Activated CD4-positive, alpha-beta memory T cell treated with anti-CD3 and anti-CD28 coated beads for 36 hours (primary cell): ENCODE measurements at regions of chr18 and their contacts with region 1.

Region 1: DNA sequence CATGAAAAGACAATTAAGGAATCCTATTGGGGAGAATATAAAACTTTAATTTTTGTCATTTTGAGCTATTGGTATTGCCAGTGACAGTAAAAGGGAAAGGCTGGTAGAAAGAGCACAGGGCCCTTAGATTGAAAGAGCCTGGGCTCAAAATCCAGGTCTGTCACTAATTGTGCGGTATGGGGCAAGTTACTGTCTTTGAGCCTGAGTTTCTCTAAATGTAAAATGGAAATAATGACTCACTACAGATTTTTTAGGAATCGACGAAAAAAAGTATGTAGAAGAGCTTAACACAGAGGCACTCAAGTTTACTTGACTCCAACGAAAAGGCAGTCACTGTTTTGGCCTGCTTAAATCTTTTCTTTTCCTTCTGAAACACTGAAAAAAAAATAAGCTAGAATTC is 7.0 kb downstream of the NDUFV2 start:
- DNase-seq: no peak
- H3K4me3 Mint-ChIP-seq: peak overlapping the region; percentile 90
- H3K27ac Mint-ChIP-seq: peak overlapping the region; percentile 75
- H3K4me1 Mint-ChIP-seq: peaks cover 82% of the 10 kb centered on the region
- H3K27me3 Mint-ChIP-seq: no peaks in the 10 kb centered on the region

Region 2: GRCh38 chr18:9088252-9088651 is 21.3 kb before region 1 on chr18:
- CTCF ChIA-PET with region 1: interaction called, 11 read pairs
- POLR2A ChIA-PET with region 1: interaction called, 134 read pairs
- intact Hi-C with region 1: loop called (anchors 2 kb)
- DNase-seq: no peak
- H3K4me3 Mint-ChIP-seq: peak overlapping the region; percentile 73
- H3K27ac Mint-ChIP-seq: peak overlapping the region; percentile 100
- H3K4me1 Mint-ChIP-seq: peaks cover 68% of the 10 kb centered on the region
- H3K27me3 Mint-ChIP-seq: no peaks in the 10 kb centered on the region

Region 3: DNA sequence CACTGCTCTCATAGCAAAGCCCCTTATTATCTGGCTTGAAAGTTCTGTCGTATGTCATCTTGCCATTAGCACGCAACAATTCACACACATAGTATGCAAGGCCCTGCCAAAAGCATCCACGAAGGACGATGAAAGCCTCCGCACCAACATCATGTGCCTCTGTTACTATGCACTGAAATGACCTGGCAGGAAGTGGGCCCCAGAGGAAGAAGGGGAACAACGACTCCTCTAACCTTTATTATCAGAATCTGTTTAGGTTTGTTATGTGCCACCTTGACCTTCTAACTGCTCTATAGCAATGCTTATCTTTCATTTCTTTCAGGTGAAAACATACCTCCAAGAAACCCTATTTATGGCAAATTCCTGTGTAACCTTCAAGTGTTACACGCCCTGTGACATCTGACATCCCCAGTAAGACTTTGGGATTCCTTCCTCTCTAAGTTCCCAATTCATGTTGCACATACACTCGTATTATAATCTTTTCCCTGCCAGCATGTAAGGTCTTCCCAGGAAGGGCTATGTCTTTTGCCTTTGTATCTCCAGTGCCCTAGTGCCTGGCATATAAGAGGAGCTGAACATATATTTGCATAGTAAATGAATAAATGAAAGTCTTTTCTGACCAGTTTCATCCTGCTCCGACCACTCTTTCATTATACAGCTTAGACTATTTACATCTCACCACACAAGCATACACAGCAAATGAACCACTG is 14.1 kb before region 1 on chr18:
- CTCF ChIA-PET with region 1: interaction called, 11 read pairs
- POLR2A ChIA-PET with region 1: interaction called, 134 read pairs
- intact Hi-C with region 1: loop called (anchors 2 kb)
- DNase-seq: peak; percentile 87
- H3K4me3 Mint-ChIP-seq: peak overlapping the region; percentile 68
- H3K27ac Mint-ChIP-seq: peak overlapping the region; percentile 100
- H3K4me1 Mint-ChIP-seq: peaks cover 68% of the 10 kb centered on the region
- H3K27me3 Mint-ChIP-seq: no peaks in the 10 kb centered on the region

Region 4: GRCh38 chr18:9173770-9174233 is 64.3 kb after region 1 on chr18:
- CTCF ChIA-PET with region 1: no interaction called
- POLR2A ChIA-PET with region 1: no interaction called
- intact Hi-C with region 1: no loop called
- DNase-seq: peak; percentile 55
- H3K4me3 Mint-ChIP-seq: no peak overlapping the region
- H3K27ac Mint-ChIP-seq: peak overlapping the region; percentile 23
- H3K4me1 Mint-ChIP-seq: peaks cover 86% of the 10 kb centered on the region
- H3K27me3 Mint-ChIP-seq: no peaks in the 10 kb centered on the region